Mammary epithelial cell (primary cell): ENCODE measurements at regions of chr15 and their contacts with region 1.

Region 1: DNA sequence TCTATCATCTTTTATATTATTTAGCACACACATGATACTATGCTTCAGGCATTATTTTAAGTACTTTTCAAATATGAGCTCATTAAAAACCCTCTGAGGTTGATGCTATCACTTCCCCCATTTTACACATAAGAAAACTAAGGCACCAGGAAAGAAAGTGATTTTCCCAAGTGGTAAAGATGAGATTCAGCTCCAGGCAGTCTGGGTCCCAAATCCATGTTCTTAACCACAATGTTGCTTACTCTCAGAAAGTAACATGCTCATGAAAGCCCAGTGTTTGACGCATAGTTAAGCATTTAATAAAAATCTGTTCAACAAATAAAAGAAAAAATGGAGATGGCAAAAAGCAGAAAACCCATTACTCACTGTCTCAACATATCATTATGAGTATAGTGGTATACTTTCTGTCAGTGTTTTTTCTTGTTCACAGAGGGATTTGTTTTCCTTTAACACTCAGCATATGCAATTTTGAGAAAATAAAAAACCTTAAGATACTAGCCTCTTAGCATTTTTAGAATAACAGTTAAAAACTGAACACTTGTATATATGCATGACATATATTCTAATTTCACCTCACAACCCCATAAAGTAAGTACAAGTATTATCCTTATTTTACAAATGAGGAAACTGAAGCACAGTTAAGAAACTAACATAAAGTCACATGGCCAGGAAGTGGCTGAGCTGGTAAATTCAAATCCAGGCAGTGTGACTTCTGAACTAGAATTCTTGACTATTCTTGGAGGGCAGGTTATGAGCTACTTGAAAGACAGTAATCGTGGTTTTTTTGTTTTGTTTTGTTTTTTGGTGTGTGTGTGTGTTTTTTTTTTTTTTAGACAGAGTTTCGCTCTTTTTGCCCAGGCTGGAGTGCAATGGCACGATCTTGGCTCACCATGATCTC is 10.4 kb downstream of the PEAK1 start:
- DNase-seq: no peak
- H3K4me3 ChIP-seq: no peak overlapping the region
- H3K27ac ChIP-seq: no peak overlapping the region
- H3K4me1 ChIP-seq: no peaks in the 10 kb centered on the region
- H3K27me3 ChIP-seq: no peaks in the 10 kb centered on the region
- CTCF ChIP-seq: no peak

Region 2: DNA sequence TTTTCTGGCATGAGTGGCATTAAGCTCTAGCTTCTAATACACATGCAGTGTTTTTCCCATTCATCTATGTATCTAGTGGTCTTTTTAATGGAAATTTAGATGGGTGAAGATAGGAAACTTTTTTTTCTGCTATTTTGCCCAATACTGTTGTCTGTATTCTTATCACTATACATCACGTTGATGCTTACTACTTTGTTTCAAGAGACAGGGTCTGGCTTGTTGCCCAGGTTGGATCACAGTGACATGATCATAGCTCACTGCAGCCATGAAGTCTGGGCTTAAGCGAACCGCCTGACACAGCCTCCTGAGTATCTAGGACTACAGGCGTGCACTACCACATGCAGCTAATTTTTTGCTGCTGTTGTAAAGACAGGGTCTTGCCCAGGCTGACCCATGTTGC is 74.2 kb before region 1 on chr15:
- CTCF ChIA-PET with region 1: no interaction called
- dilution Hi-C with region 1: no loop called
- in situ Hi-C with region 1: no loop called
- intact Hi-C with region 1: no loop called
- DNase-seq: no peak
- H3K4me3 ChIP-seq: no peak overlapping the region
- H3K27ac ChIP-seq: no peak overlapping the region
- H3K4me1 ChIP-seq: peaks cover 14% of the 10 kb centered on the region
- H3K27me3 ChIP-seq: no peaks in the 10 kb centered on the region
- CTCF ChIP-seq: no peak

Region 3: GRCh38 chr15:77455696-77456321 is 46.3 kb after region 1 on chr15:
- CTCF ChIA-PET with region 1: no interaction called
- dilution Hi-C with region 1: loop called (anchors 5 kb)
- in situ Hi-C with region 1: no loop called
- intact Hi-C with region 1: no loop called
- DNase-seq: no peak
- H3K4me3 ChIP-seq: no peak overlapping the region
- H3K27ac ChIP-seq: no peak overlapping the region
- H3K4me1 ChIP-seq: peaks cover 20% of the 10 kb centered on the region
- H3K27me3 ChIP-seq: no peaks in the 10 kb centered on the region
- CTCF ChIP-seq: no peak

Region 4: DNA sequence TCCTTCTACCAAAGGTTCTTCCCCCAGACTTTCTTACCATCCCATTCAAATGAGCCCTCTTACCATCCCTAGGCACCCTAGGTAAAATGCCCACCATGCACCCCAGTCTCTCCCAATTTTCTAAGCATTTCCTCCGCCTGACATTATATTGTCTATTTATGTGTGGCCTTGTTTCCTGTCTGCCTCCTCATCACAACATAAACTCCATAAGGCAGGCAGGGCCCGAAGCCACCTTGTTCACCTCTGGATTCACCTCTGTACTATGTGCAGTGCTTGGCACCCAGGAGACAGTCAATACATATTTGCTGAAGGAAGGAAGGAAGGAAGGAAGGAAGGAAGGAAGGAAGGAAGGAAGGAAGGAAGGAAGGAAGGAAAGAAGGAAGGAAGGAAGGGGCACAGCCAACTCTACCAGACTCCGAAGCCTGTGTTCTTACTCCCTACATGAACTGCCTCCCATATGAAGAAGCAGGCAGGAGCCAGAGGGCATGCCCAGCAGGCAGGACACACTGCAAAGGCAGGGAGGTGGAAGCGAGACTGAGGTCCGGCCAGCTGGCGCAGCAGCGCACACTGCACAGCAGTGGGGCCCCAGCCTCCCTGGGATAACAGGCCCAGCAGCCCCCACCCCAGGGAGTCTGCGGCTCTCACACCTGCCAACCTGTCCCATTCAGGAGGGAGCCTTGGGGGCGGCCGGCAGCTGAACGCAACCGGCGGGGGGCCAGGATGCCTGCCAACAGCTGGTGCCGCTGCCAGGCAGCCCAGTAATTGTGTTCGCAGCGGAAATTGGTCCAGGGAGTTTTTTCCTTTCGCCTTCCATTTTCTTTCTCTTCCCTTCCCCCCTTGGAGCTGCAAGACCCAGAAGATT is 329.2 kb after region 1 on chr15:
- CTCF ChIA-PET with region 1: no interaction called
- dilution Hi-C with region 1: no loop called
- in situ Hi-C with region 1: no loop called
- intact Hi-C with region 1: no loop called
- DNase-seq: no peak
- H3K4me3 ChIP-seq: no peak overlapping the region
- H3K27ac ChIP-seq: no peak overlapping the region
- H3K4me1 ChIP-seq: no peaks in the 10 kb centered on the region
- H3K27me3 ChIP-seq: peaks cover 5% of the 10 kb centered on the region
- CTCF ChIP-seq: no peak